Ascending aorta (tissue), 2 donors: ENCODE measurements at regions of chr7 and their contacts with region 1.

Region 1: GRCh38 chr7:118195837-118196474 is 12.0 kb downstream of the LSM8 start:
- DNase-seq: no peak
- H3K4me3 ChIP-seq: no peak overlapping the region
- H3K27ac ChIP-seq: no peak overlapping the region
- H3K4me1 ChIP-seq: no peaks in the 10 kb centered on the region
- H3K27me3 ChIP-seq: no peaks in the 10 kb centered on the region
- CTCF ChIP-seq: peak; percentile 14 to 66 (median 54)

Region 2: GRCh38 chr7:117750612-117751563 is 445.1 kb before region 1 on chr7:
- intact Hi-C with region 1: loop called (anchors 5 kb)
- DNase-seq: no peak
- H3K4me3 ChIP-seq: no peak overlapping the region
- H3K27ac ChIP-seq: no peak overlapping the region
- H3K4me1 ChIP-seq: no peaks in the 10 kb centered on the region
- H3K27me3 ChIP-seq: no peaks in the 10 kb centered on the region
- CTCF ChIP-seq: peak; percentile 21 to 53 (median 31)

Region 3: GRCh38 chr7:118029826-118030422 is 166.0 kb before region 1 on chr7:
- intact Hi-C with region 1: no loop called
- DNase-seq: no peak
- H3K4me3 ChIP-seq: no peak overlapping the region
- H3K27ac ChIP-seq: no peak overlapping the region
- H3K4me1 ChIP-seq: no peaks in the 10 kb centered on the region
- H3K27me3 ChIP-seq: no peaks in the 10 kb centered on the region
- CTCF ChIP-seq: no peak

Region 4: DNA sequence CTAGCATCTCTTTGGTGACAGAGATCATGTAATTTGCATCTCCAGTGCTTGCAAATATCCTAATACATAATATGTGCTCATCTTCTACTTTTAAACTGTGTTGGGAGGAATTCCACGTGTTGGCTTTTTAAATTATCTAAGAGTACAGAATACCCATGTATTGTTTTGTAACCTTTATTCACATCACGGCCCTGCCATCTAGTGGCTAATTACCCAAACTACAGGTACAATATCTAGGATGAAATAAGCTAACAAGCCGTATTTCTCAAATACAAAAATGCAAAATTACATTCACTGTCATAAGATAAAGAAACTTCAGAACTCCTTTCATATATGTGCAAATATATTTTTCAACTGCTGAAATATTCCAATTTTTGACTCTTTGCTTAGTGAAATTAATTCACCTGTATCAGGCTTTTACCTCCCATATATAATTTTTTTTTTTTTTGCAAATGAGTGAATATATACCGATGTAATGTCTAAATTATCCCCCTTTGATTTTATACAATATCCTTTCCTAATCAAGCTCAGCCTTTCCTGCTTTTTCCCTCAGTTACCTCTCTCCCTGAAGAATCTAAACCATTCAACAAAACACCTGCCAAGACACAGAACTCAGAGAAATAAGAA is 42.3 kb before region 1 on chr7:
- intact Hi-C with region 1: no loop called
- DNase-seq: no peak
- H3K4me3 ChIP-seq: no peak overlapping the region
- H3K27ac ChIP-seq: no peak overlapping the region
- H3K4me1 ChIP-seq: no peaks in the 10 kb centered on the region
- H3K27me3 ChIP-seq: no peaks in the 10 kb centered on the region
- CTCF ChIP-seq: peak; percentile 15 to 44 (median 35)